GM12878 (cell line): ENCODE measurements at regions of chr4 and their contacts with region 1.

Region 1: DNA sequence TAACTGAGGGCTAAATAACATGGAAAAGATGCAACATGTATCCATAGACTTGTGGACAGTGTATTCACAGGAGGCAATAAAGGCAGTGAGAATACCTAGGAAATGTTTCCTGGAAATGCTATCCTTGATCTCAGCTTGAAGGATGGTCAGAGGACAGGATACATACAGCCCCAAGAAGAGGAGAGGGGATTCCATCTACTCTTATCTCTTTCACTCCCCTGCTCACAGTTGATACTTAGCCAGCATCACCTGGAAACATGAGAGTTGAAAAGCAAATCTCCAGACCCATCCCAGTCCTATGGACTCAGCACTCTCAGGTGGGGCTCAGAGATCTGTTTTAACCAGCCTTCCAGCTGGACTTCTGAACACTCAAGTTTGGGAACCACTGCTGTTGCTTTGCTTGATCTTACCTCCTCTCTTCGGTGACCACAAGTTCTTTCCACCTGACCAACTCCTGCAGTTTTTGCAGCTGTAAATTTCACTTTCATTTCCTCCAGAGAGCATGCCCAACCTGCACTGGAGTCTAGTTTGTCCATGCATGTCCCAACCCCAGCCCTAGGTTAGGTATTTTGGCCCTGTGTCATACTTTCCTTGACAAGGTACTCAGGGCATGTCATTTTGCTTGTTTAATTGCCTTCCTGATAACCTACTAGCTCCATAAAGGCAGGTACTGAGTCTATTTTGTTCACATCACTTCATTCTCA is 10.4 kb downstream of the RELL1 start:
- DNase-seq: peak; percentile 85
- ATAC-seq: peak; percentile 85
- H3K4me3 ChIP-seq: peak overlapping the region; percentile 33; the same call in 1 of the 2 replicates
- H3K27ac ChIP-seq: peak overlapping the region; percentile 87
- H3K4me1 ChIP-seq: peaks cover 26% of the 10 kb centered on the region
- H3K27me3 ChIP-seq: no peaks in the 10 kb centered on the region
- CTCF ChIP-seq: no peak
- EP300 ChIP-seq: peak in 1 of 2 experiments; percentile 93; a peak in 3 of 4 replicates
- POLR2A ChIP-seq: no peak
- RAD21 ChIP-seq: 0 out of 2 replicates have a peak, but pooled peaks have one; percentile 5

Region 2: GRCh38 chr4:37516057-37516775 is 159.5 kb before region 1 on chr4:
- CTCF ChIA-PET with region 1: no interaction called
- POLR2A ChIA-PET with region 1: no interaction called
- RAD21 ChIA-PET with region 1: no interaction called
- SMC1A ChIA-PET with region 1: no interaction called
- in situ Hi-C with region 1: no loop called
- intact Hi-C with region 1: no loop called
- DNase-seq: no peak
- ATAC-seq: no peak
- H3K4me3 ChIP-seq: no peak overlapping the region
- H3K27ac ChIP-seq: no peak overlapping the region
- H3K4me1 ChIP-seq: no peaks in the 10 kb centered on the region
- H3K27me3 ChIP-seq: no peaks in the 10 kb centered on the region
- CTCF ChIP-seq: no peak
- EP300 ChIP-seq: no peak
- POLR2A ChIP-seq: no peak
- RAD21 ChIP-seq: no peak

Region 3: DNA sequence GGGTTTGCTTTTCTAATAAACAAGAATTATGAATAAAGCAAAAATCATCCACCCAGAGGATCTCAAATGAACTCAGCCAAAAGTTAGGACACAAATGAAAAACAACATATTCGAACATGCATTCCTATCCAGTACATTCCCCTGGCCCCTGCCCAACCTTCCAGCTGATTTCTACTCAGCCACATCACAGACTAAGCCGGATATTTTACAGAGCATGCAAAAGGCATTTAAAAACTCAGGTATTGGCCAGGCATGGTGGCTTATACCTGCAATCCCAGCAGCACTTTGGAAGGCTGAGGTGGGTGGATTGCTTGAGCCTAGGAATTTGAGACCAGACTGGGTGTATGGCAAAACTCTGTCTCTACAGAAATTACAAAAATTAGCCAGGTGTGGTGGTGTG is 44.2 kb before region 1 on chr4:
- CTCF ChIA-PET with region 1: interaction called, 3 read pairs
- POLR2A ChIA-PET with region 1: no interaction called
- RAD21 ChIA-PET with region 1: no interaction called
- SMC1A ChIA-PET with region 1: no interaction called
- in situ Hi-C with region 1: no loop called
- intact Hi-C with region 1: loop called (anchors 5 kb)
- DNase-seq: no peak
- ATAC-seq: no peak
- H3K4me3 ChIP-seq: no peak overlapping the region
- H3K27ac ChIP-seq: no peak overlapping the region
- H3K4me1 ChIP-seq: peaks cover 6% of the 10 kb centered on the region
- H3K27me3 ChIP-seq: no peaks in the 10 kb centered on the region
- CTCF ChIP-seq: no peak
- EP300 ChIP-seq: no peak
- POLR2A ChIP-seq: no peak
- RAD21 ChIP-seq: no peak

Region 4: GRCh38 chr4:37686373-37687193 is 10.8 kb after region 1 on chr4 and contains the start of gene RELL1:
- CTCF ChIA-PET with region 1: interaction called, 5 read pairs
- POLR2A ChIA-PET with region 1: interaction called, 9 read pairs
- RAD21 ChIA-PET with region 1: interaction called, 7 read pairs
- SMC1A ChIA-PET with region 1: interaction called, 17 read pairs
- in situ Hi-C with region 1: no loop called
- intact Hi-C with region 1: no loop called
- DNase-seq: peak; percentile 97
- ATAC-seq: peak; percentile 89
- H3K4me3 ChIP-seq: peak within 1 kb of the TSS; percentile 87
- H3K27ac ChIP-seq: peak within 1 kb of the TSS; percentile 67
- H3K4me1 ChIP-seq: peaks cover 11% of the 10 kb centered on the region
- H3K27me3 ChIP-seq: no peaks in the 10 kb centered on the region
- CTCF ChIP-seq: no peak
- EP300 ChIP-seq: no peak
- POLR2A ChIP-seq: no peak
- RAD21 ChIP-seq: no peak
- polyA plus RNA-seq, gene RELL1: 0.20 to 0.26 TPM